ENCODE measurements at regions of chr4 and their contacts with region 1.

Region 1: DNA sequence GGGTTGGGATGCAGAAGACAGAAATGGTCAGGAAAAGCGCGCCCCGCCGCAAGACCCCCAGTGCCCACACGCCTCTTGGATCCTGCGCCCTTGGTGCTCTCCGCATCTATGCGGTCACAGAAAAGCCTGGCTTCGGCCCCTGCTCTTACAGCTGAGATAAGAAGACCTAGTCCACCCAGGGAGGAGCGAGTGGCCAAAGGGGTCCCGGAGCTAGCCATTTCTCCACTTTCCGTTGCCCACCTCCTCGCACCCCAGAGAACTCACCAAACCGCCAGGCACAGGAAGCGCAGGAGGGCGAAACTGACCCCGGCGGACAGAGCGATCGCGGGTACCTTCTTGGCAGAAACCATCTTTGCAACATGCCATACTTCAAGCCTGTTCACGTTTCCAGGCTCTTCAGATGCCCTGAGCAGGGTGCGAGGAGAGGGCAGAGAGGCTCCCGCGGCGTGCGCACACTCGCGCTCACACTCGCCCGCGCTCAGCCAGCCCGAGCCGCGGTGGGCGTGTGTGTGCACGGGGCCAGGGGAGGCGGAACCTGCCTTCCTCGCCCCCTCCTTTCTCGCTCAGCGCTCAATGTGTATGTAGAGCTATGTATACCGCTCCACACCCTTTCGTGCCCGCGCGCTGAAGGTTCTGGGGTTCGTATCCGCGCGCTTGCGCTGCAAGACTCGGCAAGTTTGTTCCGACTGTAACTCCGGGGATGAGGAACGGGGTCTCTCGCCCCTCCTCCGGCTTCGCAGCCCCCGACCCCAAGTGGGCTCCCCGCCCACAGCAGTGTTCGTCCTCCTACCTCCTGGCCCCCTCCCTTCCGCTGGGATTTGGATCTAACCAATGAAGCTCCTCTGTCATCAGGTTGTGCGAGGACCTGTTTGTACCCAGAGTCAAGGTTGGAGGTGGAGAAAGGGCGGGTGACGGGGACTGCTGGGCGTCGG is at the start of gene GABRA4:
- DNase-seq: peak; percentile 9 to 82 (median 68)
- H3K4me3 ChIP-seq: peak within 1 kb of the TSS; percentile 41 to 81 (median 65)
- H3K27ac ChIP-seq: peak within 1 kb of the TSS in 54 of 59 donors; percentile 32 to 90 (median 78)
- H3K27me3 ChIP-seq: peaks cover 0 to 33% (median 0%) of the 10 kb centered on the region in 45 donors
- CTCF ChIP-seq: no peak
- total RNA-seq, gene GABRA4: 13.6 to 98.5 (median 60.7) TPM

Region 2: DNA sequence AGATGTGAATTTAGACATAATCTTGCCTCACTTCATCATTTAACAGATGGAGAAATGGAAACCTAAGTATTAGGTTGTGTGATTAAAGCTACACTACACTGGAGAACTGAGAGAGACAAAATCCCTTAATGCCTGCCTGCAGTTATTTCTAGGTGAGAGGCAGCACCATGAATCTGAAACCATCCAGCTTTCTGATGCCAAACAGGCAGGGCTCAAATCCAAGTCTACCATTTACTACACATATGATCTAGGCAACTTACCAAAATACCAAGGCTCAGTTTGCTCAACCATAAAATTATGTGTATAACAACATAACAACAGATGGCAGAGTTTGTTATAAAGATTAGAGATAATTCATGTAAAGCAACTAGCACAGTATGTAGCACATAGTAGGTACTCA is 38.7 kb before region 1 on chr4:
- intact Hi-C with region 1: loop called in 1 of 2 experiments (anchors 5 kb)
- DNase-seq: no peak
- H3K4me3 ChIP-seq: no peak overlapping the region
- H3K27ac ChIP-seq: peak overlapping the region in 17 of 59 donors; percentile 2 to 57 (median 35)
- H3K27me3 ChIP-seq: no peaks in the 10 kb centered on the region
- CTCF ChIP-seq: no peak